MCF 10A (cell line): ENCODE measurements at regions of chr11 and their contacts with region 1.

Region 1: DNA sequence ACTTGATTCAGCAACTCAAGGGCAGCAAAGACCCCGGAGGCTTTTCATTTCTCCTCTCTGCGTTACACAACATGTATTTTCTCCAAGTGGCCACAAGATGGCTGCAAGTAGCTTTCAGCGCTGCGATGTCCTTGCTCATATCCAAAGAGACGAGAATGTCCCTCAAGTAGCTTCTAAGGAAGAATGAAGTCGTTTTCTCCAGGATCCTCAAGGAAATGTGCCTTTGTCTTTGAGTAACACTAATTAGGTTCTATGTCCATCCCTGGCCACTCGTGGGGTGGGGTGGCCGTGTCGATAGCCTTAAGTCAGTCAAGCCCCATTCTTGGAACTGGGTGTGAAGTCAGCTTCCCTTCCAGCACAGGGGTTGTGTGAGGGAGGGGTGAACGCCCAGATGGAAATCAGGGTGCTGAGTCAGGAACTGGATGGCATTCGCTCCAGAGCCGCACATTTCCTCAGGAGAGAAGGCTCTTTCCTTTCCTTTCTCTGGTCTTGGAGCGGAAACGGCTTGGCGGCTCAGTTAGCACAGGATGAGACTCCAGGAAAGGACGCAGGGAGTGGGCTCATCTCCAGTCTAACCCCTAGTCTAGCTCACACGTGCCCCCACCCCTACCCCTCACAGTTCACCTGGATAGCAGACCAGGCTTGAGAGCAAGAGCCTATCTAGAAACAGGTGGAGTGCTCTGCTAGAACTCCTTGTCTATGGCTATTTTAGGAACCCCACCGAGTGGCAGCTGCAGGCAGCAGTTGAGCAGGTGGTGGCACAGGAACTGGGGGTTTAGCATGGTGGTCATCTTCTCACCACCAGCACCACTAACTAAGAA is 44.3 kb downstream of the NNMT start:
- DNase-seq: peak; percentile 74
- H3K4me3 Mint-ChIP-seq: no peak overlapping the region
- H3K27ac Mint-ChIP-seq: no peak overlapping the region
- H3K4me1 Mint-ChIP-seq: peaks cover 9% of the 10 kb centered on the region
- H3K27me3 Mint-ChIP-seq: peaks cover 13% of the 10 kb centered on the region
- CTCF ChIP-seq: peak; percentile 90

Region 2: DNA sequence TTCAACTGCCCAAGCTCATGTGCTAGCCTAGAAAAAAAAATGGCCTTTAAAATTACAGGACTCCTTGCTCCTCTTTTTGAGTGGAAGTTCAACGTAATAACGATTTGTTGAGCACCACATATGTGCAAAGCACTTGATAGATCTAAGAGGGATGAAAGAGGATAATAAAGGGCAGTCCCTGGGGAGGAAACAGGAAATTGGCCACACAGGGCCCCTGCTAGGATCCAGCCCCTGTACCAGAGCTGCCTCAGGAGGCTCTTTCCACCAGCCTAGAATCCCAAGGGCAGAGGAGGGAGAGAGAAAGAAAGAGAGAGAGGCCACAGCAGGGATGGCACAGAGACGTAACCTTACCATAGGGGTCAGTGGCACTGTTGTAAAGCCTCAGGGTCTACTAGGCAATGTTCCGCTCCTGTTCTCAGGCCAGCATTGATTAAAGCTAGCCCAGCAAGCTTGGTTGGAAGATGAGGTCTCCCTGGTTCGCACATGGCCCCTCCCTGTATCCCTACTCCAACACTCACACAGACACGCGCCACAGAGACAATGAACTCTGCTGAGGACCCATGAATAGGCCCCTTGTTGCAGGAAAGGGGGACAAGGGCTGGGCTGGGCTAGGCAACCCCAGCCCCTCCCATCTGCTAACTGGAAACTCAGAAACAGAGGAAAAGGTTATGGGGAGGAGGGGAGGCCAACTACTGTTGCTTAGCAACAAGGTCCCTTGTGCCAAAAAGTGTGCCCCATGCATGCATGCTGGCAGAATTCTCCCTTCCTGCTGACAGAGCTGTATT is 634.5 kb before region 1 on chr11 and contains the start of gene TMPRSS5:
- CTCF ChIA-PET with region 1: no interaction called
- POLR2A ChIA-PET with region 1: no interaction called
- intact Hi-C with region 1: no loop called
- DNase-seq: no peak
- H3K4me3 Mint-ChIP-seq: no peak within 1 kb of the TSS
- H3K27ac Mint-ChIP-seq: no peak within 1 kb of the TSS
- H3K4me1 Mint-ChIP-seq: no peaks in the 10 kb centered on the region
- H3K27me3 Mint-ChIP-seq: no peaks in the 10 kb centered on the region
- CTCF ChIP-seq: no peak
- total RNA-seq, gene TMPRSS5: 0.49 and 0.83 TPM in 2 replicates

Region 3: DNA sequence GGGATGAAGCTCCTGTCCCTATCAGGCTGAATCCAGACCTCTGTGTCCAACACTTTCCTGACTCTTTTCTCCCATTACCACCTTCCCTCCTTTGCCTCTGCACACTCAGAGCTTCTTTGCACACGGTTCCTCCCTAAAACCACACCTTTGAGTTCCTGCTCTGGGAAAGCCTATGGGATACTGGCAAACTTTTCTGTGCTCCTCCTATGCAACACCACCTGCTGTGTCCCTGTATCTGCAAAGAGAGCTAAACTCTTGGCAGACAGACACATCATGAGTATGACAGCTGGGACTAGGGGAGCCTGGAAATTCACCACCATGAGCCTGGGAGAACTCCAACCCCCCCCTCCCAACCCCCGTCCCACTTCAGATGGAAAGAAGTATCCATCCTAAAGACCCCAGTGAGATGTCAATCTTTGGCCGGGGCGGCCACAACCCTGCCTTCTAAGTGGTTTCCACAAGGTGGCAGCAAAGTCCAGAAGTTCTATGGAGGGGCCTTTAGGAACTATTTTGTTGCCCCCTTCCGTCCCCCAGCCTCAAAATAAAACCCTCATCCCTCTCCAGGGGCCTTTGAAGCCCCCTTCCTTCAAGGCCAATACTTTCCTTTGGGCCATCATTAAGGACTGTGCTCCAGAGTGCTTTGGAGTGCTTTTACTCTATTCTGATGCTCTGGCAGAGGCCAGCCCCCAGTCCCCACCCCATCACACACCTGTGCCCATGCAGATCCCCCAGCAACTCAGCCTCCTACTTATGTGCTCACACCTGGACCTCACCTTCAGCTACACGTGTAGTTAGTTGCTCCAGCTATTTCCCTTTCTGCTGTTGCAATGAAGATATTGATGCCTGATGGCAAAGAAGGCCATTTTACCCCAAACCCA is 346.2 kb before region 1 on chr11:
- CTCF ChIA-PET with region 1: interaction called, 9 read pairs
- POLR2A ChIA-PET with region 1: no interaction called
- intact Hi-C with region 1: loop called (anchors 5 kb)
- DNase-seq: peak; percentile 36
- H3K4me3 Mint-ChIP-seq: no peak overlapping the region
- H3K27ac Mint-ChIP-seq: no peak overlapping the region
- H3K4me1 Mint-ChIP-seq: no peaks in the 10 kb centered on the region
- H3K27me3 Mint-ChIP-seq: peaks cover 74% of the 10 kb centered on the region
- CTCF ChIP-seq: peak; percentile 87

Region 4: GRCh38 chr11:114400217-114400914 is 59.8 kb after region 1 on chr11 and contains the starts of genes C11orf71 and RBM7:
- CTCF ChIA-PET with region 1: interaction called, 5 read pairs
- POLR2A ChIA-PET with region 1: interaction called, 10 read pairs
- intact Hi-C with region 1: loop called (anchors 2 kb)
- DNase-seq: peak; percentile 99
- H3K4me3 Mint-ChIP-seq: peak within 1 kb of the TSS; percentile 92
- H3K27ac Mint-ChIP-seq: peak within 1 kb of the TSS; percentile 100
- H3K4me1 Mint-ChIP-seq: peaks cover 39% of the 10 kb centered on the region
- H3K27me3 Mint-ChIP-seq: no peaks in the 10 kb centered on the region
- CTCF ChIP-seq: no peak
- total RNA-seq, gene C11orf71: 3.9 and 5.6 TPM in 2 replicates
- total RNA-seq, gene RBM7: 42.7 and 46.4 TPM in 2 replicates

Region 5: DNA sequence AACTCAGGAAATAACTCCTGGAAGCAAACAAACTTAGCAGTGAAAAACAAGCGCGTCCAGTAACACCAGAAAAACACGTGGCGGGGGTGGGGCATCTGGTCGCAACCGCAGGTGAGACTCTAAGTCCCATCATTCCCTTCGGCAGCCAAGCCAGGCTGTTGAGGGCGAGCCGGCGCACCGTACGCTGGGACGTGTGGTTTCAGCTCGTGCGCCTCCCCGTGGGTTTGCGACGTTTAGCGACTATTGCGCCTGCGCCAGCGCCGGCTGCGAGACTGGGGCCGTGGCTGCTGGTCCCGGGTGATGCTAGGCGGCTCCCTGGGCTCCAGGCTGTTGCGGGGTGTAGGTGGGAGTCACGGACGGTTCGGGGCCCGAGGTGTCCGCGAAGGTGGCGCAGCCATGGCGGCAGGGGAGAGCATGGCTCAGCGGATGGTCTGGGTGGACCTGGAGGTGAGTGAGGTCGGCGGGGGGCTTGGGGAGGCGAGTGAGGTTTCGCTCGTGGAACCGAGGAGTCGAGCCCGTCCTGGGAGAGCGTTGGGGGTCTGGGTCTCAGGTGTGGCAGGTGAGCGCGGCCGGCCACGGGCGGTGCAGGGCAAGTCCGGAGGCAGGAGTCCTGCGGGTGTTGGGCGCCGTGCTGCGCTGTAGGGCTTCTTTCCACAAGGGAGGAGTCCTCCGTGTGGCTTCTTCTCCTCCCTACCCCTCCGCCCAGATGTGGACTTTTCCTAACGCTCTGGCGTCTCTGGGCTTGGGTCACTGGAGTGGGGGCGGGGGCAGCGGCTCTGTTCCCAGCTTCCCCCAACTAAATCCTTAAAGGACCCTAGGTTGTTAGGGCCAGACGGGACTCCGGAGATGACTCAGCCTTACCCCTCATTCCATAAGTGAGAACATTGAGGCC is 99.0 kb after region 1 on chr11 and contains the start of gene REXO2:
- CTCF ChIA-PET with region 1: interaction called, 3 read pairs
- POLR2A ChIA-PET with region 1: interaction called, 3 read pairs
- intact Hi-C with region 1: loop called (anchors 1 kb)
- DNase-seq: peak; percentile 96
- H3K4me3 Mint-ChIP-seq: peak within 1 kb of the TSS; percentile 99
- H3K27ac Mint-ChIP-seq: peak within 1 kb of the TSS; percentile 93
- H3K4me1 Mint-ChIP-seq: peaks cover 13% of the 10 kb centered on the region
- H3K27me3 Mint-ChIP-seq: no peaks in the 10 kb centered on the region
- CTCF ChIP-seq: peak; percentile 12
- total RNA-seq, gene REXO2: 125 and 126 TPM in 2 replicates

Region 6: DNA sequence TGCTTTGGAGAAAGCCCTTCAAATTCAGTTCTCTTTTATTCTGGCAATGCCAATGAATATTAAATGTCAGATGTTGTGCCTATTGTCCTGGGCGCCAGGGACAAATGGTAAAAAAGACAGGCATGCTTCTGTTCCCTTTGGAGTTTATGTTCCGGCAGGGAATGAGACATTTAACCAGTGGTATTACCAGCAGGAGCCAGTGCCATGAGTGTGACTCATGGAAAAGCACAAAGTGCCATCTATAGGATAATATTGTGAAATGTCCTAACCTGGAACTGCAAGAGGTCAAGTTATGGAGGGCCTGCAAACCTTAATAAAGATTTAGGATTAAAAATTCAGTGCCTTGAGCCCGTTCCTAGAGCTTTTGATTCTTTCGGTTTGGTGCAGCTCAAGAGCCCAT is 138.2 kb after region 1 on chr11:
- CTCF ChIA-PET with region 1: interaction called, 3 read pairs
- POLR2A ChIA-PET with region 1: no interaction called
- intact Hi-C with region 1: loop called (anchors 2 kb)
- DNase-seq: peak; percentile 75
- H3K4me3 Mint-ChIP-seq: no peak overlapping the region
- H3K27ac Mint-ChIP-seq: no peak overlapping the region
- H3K4me1 Mint-ChIP-seq: peaks cover 12% of the 10 kb centered on the region
- H3K27me3 Mint-ChIP-seq: no peaks in the 10 kb centered on the region
- CTCF ChIP-seq: no peak

Region 7: DNA sequence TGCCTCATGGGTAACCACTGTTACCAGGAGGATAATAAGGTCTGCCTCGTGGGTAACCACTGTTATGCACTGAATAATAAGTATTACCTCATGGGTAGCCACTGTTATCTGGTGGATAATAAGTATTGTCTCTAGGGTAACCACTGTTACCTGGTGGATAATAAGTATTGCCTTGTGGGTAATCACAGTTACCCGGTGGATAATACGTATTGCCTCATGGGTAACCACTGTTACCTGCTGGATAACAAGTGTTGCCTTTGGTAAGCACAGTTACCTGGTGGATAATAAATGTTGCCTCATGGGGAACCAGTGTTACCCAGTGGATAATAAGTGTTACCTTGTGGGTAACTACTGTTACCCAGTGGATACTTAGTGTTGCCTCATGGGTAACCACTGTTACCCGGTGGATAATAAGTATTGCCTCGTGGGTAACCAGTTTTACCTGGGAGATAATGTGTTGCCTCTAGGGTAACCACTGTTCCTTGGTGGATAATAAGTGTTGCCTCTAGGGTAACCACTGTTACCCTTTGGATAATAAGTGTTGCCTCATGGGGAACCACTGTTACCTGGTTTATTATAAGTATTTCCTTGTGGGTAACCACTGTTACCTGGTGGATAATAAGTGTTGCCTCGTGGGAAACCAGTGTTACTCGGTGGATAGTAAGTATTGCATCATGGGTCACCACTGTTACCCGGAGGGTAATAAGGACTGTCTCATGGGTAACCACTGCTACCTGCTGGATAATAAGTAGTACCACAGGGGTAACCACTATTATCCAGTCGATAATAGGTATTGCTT is 265.7 kb after region 1 on chr11:
- CTCF ChIA-PET with region 1: no interaction called
- POLR2A ChIA-PET with region 1: no interaction called
- intact Hi-C with region 1: loop called (anchors 1 kb)
- DNase-seq: peak; percentile 27
- H3K4me3 Mint-ChIP-seq: no peak overlapping the region
- H3K27ac Mint-ChIP-seq: no peak overlapping the region
- H3K4me1 Mint-ChIP-seq: no peaks in the 10 kb centered on the region
- H3K27me3 Mint-ChIP-seq: no peaks in the 10 kb centered on the region
- CTCF ChIP-seq: no peak

Region 8: DNA sequence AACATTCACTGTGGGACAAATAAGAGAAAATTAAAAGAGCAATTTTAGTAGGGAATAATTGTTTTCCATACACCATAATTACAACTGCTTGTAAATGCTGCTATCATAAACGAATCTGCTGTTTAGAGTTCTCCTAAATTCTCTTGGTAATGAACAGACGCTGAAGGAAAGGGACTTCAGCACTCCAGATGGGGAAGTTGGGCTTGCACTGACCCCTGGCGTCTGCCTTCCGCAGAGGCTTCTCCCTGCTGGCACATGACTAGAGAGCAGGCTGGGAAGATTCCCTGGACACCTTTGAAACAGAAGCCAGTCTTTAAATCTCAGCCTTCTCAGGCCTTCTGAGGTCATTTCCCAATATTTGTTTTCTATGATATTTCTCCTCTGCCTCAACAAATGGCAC is 421.9 kb after region 1 on chr11:
- CTCF ChIA-PET with region 1: interaction called, 3 read pairs
- POLR2A ChIA-PET with region 1: no interaction called
- intact Hi-C with region 1: loop called (anchors 10 kb)
- DNase-seq: peak; percentile 41
- H3K4me3 Mint-ChIP-seq: no peak overlapping the region
- H3K27ac Mint-ChIP-seq: no peak overlapping the region
- H3K4me1 Mint-ChIP-seq: no peaks in the 10 kb centered on the region
- H3K27me3 Mint-ChIP-seq: peaks cover 48% of the 10 kb centered on the region
- CTCF ChIP-seq: peak; percentile 7